H1 (cell line): ENCODE measurements at regions of chr11 and their contacts with region 1.

Region 1: DNA sequence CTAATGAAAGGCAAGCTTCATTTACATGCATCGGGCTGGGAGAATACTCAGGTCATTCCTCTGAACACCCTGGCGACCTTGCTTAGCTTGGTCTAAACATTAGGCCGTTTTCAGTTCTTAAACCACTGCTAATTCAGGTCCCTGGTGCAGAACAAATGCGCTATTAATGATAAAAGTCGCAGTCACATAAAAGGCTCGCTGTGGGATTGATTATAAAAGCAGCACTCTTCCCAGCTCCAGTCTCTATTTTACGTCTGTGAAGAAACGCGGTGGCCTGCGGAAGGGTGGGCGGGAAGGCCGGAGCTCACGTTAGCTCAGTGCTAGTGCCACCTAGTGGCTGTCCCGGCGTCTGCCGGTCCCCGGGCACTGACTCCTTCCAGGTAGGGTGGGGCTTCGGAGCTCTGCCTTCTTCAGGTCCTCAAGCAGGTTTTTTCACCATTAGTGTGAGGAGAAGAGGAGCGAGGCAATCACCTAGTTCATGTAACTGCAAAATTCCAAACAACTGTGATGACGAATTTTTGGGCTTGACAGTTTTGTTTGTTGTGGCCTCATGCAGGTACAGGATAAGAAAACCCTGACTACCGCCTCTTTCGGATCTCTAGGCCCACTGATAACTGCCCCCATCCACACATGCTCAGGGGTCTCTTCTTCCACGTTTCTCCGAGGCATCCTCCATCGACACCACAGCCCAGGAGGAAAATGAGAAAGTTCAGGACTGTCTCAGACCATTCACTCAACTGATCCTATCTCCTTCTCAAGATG is 66.5 kb upstream of the CLMP start:
- DNase-seq: peak; percentile 68 to 97
- H3K4me3 ChIP-seq: peak overlapping the region in 2 of 4 experiments; percentile 34 to 38; a peak in 1 of 8 replicates
- H3K27ac ChIP-seq: no peak overlapping the region
- H3K4me1 ChIP-seq: peaks cover 0 to 2% (median 0%) of the 10 kb centered on the region in 4 experiments; a peak in 1 of 7 replicates
- H3K27me3 ChIP-seq: peaks cover 0 to 2% (median 0%) of the 10 kb centered on the region in 4 experiments; a peak in 1 of 7 replicates
- CTCF ChIP-seq: peak; percentile 90 to 97 (median 95)
- EP300 ChIP-seq: no peak
- POLR2A ChIP-seq: peak in 1 of 2 experiments; percentile 57; a peak in 1 of 3 replicates
- RAD21 ChIP-seq: peak; percentile 85 to 88

Region 2: DNA sequence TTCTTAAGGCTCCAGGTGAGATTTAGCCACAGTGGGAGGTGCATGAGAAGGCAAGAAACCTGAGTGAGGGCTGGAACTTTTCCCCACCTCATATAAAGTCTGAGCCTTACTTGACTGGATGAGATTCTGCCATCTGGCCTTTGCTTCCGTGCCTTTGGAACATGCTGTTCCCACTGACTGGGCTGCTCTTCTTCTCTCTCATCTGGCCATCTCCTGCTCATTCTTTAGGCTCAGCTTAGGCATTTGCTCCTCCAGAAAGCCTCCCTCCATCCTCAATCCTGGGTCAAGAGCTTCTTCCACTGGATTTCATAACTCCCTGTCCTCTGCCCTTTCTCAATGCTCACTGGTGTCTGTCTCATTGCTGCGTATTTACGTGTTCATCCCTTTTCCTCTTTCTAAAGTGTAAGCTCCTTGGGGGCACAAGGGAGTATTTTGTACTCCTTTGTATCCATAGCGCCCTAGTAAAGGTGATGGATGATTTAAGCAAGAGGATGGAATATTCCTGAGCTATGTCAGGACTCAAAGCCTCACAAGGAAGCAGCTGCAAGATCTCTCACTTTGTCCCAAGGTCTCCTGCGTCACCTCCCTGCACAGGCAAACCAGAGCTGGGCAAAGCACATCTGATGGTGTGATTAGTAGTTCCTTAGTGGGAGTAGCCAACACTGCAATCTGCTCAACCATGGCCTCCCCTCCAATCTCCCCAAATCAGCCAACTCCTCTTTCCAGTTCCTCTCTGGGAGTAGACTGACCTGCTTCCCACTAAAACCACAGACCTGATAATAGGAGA is 214.9 kb before region 1 on chr11:
- CTCF ChIA-PET with region 1: interaction called, 11 read pairs
- POLR2A ChIA-PET with region 1: no interaction called
- DNase-seq: no peak
- H3K4me3 ChIP-seq: no peak overlapping the region
- H3K27ac ChIP-seq: no peak overlapping the region
- H3K4me1 ChIP-seq: no peaks in the 10 kb centered on the region
- H3K27me3 ChIP-seq: no peaks in the 10 kb centered on the region
- CTCF ChIP-seq: no peak
- EP300 ChIP-seq: no peak
- POLR2A ChIP-seq: no peak
- RAD21 ChIP-seq: no peak

Region 3: DNA sequence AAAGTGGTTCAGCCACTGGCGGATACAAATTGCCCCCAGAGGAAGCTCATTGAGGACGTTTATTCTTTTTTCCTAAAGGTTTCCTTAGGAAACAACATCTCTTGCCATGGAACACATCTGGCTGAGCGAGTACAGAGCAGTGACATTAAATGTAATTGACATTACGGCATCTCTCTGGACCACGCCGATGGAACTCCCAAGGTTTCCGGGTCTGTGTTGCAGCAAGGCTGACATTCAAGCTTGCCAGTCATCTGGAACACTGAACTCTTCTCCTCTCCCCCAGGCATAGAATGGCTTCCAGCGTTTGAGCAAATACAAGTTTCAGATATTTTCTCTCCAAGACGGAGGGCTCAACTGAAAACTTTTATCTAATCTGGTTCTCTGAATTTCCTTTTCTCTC is 108.6 kb before region 1 on chr11:
- CTCF ChIA-PET with region 1: interaction called, 11 read pairs
- POLR2A ChIA-PET with region 1: no interaction called
- DNase-seq: no peak
- H3K4me3 ChIP-seq: no peak overlapping the region
- H3K27ac ChIP-seq: no peak overlapping the region
- H3K4me1 ChIP-seq: 0 out of 7 replicates have a peak, but pooled peaks cover 0 to 2% (median 0%) of the 10 kb centered on the region in 4 experiments
- H3K27me3 ChIP-seq: no peaks in the 10 kb centered on the region
- CTCF ChIP-seq: no peak
- EP300 ChIP-seq: no peak
- POLR2A ChIP-seq: no peak
- RAD21 ChIP-seq: no peak

Region 4: GRCh38 chr11:123246749-123247495 is 14.6 kb before region 1 on chr11:
- CTCF ChIA-PET with region 1: interaction called, 16 read pairs
- POLR2A ChIA-PET with region 1: interaction called, 3 read pairs
- DNase-seq: peak; percentile 61 to 92
- H3K4me3 ChIP-seq: no peak overlapping the region
- H3K27ac ChIP-seq: no peak overlapping the region
- H3K4me1 ChIP-seq: peaks cover 0 to 5% (median under 1%) of the 10 kb centered on the region in 4 experiments; a peak in 2 of 7 replicates
- H3K27me3 ChIP-seq: no peaks in the 10 kb centered on the region
- CTCF ChIP-seq: peak; percentile 94 to 98 (median 95)
- EP300 ChIP-seq: no peak
- POLR2A ChIP-seq: no peak
- RAD21 ChIP-seq: peak; percentile 99

Region 5: GRCh38 chr11:123272565-123272964 is 11.0 kb after region 1 on chr11:
- CTCF ChIA-PET with region 1: interaction called, 22 read pairs
- POLR2A ChIA-PET with region 1: interaction called, 3 read pairs
- DNase-seq: no peak
- H3K4me3 ChIP-seq: no peak overlapping the region
- H3K27ac ChIP-seq: no peak overlapping the region
- H3K4me1 ChIP-seq: no peaks in the 10 kb centered on the region
- H3K27me3 ChIP-seq: no peaks in the 10 kb centered on the region
- CTCF ChIP-seq: no peak
- EP300 ChIP-seq: no peak
- POLR2A ChIP-seq: no peak
- RAD21 ChIP-seq: no peak

Region 6: DNA sequence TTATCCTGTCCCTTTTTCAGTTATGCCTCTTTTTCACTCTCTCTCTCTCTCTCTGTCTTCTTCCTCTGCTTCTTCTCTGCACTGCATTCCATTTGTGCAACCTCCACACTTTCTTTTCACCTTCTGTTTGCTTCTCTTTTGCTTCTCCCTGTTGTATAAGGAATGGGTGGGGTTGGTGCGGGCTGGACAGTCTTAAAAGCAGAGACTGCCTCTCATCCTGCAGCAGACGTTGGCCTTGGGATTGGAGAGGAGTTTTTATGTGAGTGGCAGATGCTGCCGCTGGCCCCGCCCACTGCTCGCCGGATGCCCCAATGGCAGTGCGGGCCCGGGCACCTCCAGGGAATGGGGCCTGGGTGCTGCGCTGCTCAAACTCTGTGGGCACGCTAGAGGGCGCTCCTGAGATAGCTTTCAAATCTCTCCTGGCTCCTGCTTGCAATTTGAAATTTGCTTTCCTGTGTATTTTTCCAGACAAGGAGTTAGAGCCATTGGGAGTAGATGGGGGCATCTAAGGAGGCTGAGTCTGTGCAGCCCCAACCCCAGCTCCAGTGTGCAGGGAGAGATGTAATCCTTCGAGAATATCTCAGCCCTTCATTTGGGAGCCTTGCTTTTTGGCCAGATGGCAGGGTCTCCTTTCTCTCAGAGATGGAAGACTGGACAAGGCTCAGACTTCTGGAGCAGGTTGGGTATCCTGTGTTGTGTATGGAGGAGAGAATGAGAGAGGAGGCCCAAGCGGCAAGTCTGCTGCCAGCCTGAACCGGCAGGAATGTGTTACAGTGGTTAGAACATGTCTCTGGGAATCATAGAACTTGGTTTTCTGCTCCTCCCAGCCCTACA is 249.7 kb after region 1 on chr11:
- CTCF ChIA-PET with region 1: no interaction called
- POLR2A ChIA-PET with region 1: no interaction called
- DNase-seq: peak; percentile 80 to 92
- H3K4me3 ChIP-seq: no peak overlapping the region
- H3K27ac ChIP-seq: no peak overlapping the region
- H3K4me1 ChIP-seq: peaks cover 3 to 16% (median 10%) of the 10 kb centered on the region in 4 experiments
- H3K27me3 ChIP-seq: no peaks in the 10 kb centered on the region
- CTCF ChIP-seq: peak; percentile 80 to 89 (median 84)
- EP300 ChIP-seq: no peak
- POLR2A ChIP-seq: no peak
- RAD21 ChIP-seq: peak; percentile 83 to 86